Activated B cell treated with CpG ODN at 0.5 μM for 24 hours (primary cell): ENCODE measurements at regions of chr4 and their contacts with region 1.

Region 1: DNA sequence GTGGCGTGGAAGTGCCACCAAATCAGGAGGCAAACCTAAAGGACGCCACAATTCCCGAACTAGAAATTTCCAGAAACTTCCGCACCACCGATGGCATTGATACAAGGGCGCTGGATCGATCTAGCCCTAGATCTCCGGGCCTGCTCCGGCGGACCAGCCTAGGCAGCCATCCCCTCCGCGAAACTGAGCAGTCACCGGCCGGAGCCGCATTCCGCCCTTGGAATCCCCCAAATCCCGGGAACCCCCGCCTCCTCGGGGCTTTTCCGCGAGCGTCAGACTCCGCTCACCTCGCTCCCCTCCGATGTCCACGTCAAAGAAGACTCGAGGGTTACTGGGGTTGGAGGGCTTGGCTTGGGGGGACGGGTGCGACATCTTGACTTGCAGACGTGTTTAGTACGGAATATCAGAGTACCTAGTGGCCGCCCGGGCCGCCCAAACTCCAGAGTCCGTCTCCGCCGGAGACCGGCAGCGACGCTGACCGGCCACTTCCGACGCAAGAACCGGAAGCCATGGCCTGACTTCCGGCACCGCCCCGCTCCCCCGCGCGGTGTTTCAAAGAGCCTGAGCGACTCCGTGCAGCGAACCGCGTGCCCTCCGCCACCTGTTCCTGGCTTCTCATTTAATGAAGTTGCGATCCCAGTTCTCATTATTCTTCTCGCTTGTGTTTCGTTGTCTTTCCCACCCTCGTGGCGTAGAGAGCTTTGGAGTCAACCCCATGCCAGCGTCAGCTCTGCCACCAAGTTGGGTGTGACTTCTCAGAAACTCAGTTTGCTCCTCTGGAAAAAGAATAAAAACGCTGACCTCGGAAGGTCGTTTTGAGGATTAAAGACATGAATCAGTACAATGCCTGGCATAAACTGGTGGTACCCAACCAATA is at the start of gene PPID:
- DNase-seq: peak; percentile 79
- ATAC-seq: peak; percentile 90
- H3K4me3 Mint-ChIP-seq: peak within 1 kb of the TSS; percentile 97
- H3K27ac Mint-ChIP-seq: peak within 1 kb of the TSS; percentile 93
- H3K4me1 Mint-ChIP-seq: peaks cover 21% of the 10 kb centered on the region
- H3K27me3 Mint-ChIP-seq: peaks cover 4% of the 10 kb centered on the region
- CTCF ChIP-seq: no peak
- total RNA-seq, gene PPID: 28.5 and 29.8 TPM in 2 replicates

Region 2: DNA sequence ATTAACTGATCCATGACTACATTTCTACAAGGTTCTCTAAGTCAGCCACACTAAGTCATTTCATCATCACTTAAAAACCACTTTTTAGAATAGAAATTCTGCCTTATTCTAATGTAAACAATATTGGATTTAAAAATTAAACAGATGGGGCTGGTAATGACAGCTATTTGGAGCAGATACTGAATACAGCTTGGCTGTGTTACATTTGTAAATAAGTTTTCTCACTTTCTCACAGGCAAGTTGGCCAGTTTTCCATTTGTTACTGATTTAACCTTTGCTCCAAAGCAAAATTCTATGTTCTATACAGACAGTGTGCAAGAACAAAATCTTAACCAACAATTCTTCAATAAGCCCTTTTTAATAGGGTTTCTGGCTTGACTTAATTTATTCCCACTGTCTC is 1131.9 kb before region 1 on chr4:
- CTCF ChIA-PET with region 1: no interaction called
- POLR2A ChIA-PET with region 1: no interaction called
- intact Hi-C with region 1: no loop called
- DNase-seq: no peak
- ATAC-seq: no peak
- H3K4me3 Mint-ChIP-seq: no peak overlapping the region
- H3K27ac Mint-ChIP-seq: no peak overlapping the region
- H3K4me1 Mint-ChIP-seq: no peaks in the 10 kb centered on the region
- H3K27me3 Mint-ChIP-seq: no peaks in the 10 kb centered on the region
- CTCF ChIP-seq: no peak

Region 3: GRCh38 chr4:158513256-158513655 is 209.9 kb before region 1 on chr4:
- CTCF ChIA-PET with region 1: no interaction called
- POLR2A ChIA-PET with region 1: no interaction called
- intact Hi-C with region 1: no loop called
- DNase-seq: no peak
- ATAC-seq: no peak
- H3K4me3 Mint-ChIP-seq: no peak overlapping the region
- H3K27ac Mint-ChIP-seq: no peak overlapping the region
- H3K4me1 Mint-ChIP-seq: no peaks in the 10 kb centered on the region
- H3K27me3 Mint-ChIP-seq: peaks cover 2% of the 10 kb centered on the region
- CTCF ChIP-seq: no peak

Region 4: GRCh38 chr4:158671915-158672806 is 51.0 kb before region 1 on chr4 and contains the start of gene ETFDH:
- CTCF ChIA-PET with region 1: no interaction called
- POLR2A ChIA-PET with region 1: interaction called, 7 read pairs
- intact Hi-C with region 1: loop called (anchors 1 kb)
- DNase-seq: peak; percentile 95
- ATAC-seq: peak; percentile 83
- H3K4me3 Mint-ChIP-seq: peak within 1 kb of the TSS; percentile 98
- H3K27ac Mint-ChIP-seq: peak within 1 kb of the TSS; percentile 96
- H3K4me1 Mint-ChIP-seq: peaks cover 23% of the 10 kb centered on the region
- H3K27me3 Mint-ChIP-seq: no peaks in the 10 kb centered on the region
- CTCF ChIP-seq: no peak
- total RNA-seq, gene ETFDH: 12.0 and 15.4 TPM in 2 replicates

Region 5: GRCh38 chr4:158768555-158769174 is 45.5 kb after region 1 on chr4 and contains the start of gene FNIP2:
- CTCF ChIA-PET with region 1: no interaction called
- POLR2A ChIA-PET with region 1: no interaction called
- intact Hi-C with region 1: loop called (anchors 1 kb)
- DNase-seq: peak; percentile 41
- ATAC-seq: peak; percentile 79
- H3K4me3 Mint-ChIP-seq: peak within 1 kb of the TSS; percentile 84
- H3K27ac Mint-ChIP-seq: no peak within 1 kb of the TSS
- H3K4me1 Mint-ChIP-seq: peaks cover 8% of the 10 kb centered on the region
- H3K27me3 Mint-ChIP-seq: peaks cover 72% of the 10 kb centered on the region
- CTCF ChIP-seq: no peak
- total RNA-seq, gene FNIP2: 0.22 TPM in 1 of 2 replicates, not detected in the other

Region 6: GRCh38 chr4:158850800-158851644 is 127.9 kb after region 1 on chr4:
- CTCF ChIA-PET with region 1: no interaction called
- POLR2A ChIA-PET with region 1: no interaction called
- intact Hi-C with region 1: loop called (anchors 2 kb)
- DNase-seq: no peak
- ATAC-seq: no peak
- H3K4me3 Mint-ChIP-seq: no peak overlapping the region
- H3K27ac Mint-ChIP-seq: no peak overlapping the region
- H3K4me1 Mint-ChIP-seq: no peaks in the 10 kb centered on the region
- H3K27me3 Mint-ChIP-seq: peaks cover 32% of the 10 kb centered on the region
- CTCF ChIP-seq: no peak

Region 7: DNA sequence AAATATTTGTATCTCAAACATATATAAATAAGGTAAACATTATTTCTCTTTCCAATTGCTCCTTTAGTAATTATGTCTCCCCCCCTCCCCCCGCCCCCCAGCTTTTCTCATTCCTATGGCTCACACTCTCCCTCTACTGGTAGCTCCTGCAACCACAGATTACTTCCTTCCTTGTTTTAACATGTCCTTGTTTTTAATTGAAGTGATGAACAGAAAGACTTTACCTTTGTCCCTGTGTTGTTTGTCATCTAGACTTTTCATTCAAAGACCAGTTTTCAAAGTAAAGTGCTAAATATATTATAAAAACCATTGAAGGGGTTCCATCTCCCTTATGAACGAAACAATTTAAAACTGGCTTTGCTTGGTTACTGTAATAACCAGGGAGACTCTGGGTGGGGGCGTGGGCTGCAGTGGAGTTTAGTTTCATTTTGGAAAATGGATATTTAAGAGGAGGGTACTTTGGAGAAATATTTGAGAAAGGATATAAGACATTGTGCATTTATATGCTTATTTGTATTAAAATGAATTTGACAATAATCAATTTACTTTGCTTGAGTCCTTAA is 732.6 kb after region 1 on chr4:
- CTCF ChIA-PET with region 1: no interaction called
- POLR2A ChIA-PET with region 1: interaction called, 10 read pairs
- intact Hi-C with region 1: no loop called
- DNase-seq: no peak
- ATAC-seq: no peak
- H3K4me3 Mint-ChIP-seq: no peak overlapping the region
- H3K27ac Mint-ChIP-seq: no peak overlapping the region
- H3K4me1 Mint-ChIP-seq: peaks cover 3% of the 10 kb centered on the region
- H3K27me3 Mint-ChIP-seq: no peaks in the 10 kb centered on the region
- CTCF ChIP-seq: no peak